ENCODE measurements at regions of chr4 and their contacts with region 1.

Region 1: GRCh38 chr4:100117750-100118149 is 72.5 kb downstream of the DDIT4L start:
- DNase-seq: no peak
- ATAC-seq: no peak
- H3K4me3 ChIP-seq: no peak overlapping the region
- H3K27ac ChIP-seq: no peak overlapping the region
- H3K4me1 ChIP-seq: peaks cover 0 to 7% (median 0%) of the 10 kb centered on the region in 9 donors
- H3K27me3 ChIP-seq: no peaks in the 10 kb centered on the region
- CTCF ChIP-seq: no peak

Region 2: DNA sequence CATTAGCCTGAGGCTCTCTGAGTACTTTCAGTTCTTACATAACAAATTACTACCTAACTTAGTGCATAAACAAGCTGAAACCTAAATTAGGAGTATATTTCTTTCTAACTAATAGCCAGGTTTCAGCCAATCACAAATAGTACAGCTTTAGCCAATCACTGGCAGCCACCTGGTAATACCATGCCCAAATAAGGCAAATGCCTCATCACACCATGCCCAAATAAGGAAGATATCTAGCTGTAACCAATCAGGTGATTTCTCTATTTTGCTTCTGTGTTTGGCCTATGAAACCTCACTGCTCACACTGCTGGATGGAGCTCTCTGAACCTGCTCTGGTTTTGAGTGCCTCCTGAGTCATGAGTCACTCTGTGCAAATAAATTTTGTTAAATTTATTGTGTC is 41.0 kb before region 1 on chr4:
- intact Hi-C with region 1: no loop called
- DNase-seq: no peak
- ATAC-seq: no peak
- H3K4me3 ChIP-seq: no peak overlapping the region
- H3K27ac ChIP-seq: no peak overlapping the region
- H3K4me1 ChIP-seq: no peaks in the 10 kb centered on the region
- H3K27me3 ChIP-seq: peaks cover 0 to 6% (median 0%) of the 10 kb centered on the region in 7 donors
- CTCF ChIP-seq: no peak

Region 3: GRCh38 chr4:100162027-100162685 is 44.4 kb after region 1 on chr4:
- intact Hi-C with region 1: loop called in 1 of 10 experiments (anchors 10 kb)
- DNase-seq: no peak
- ATAC-seq: no peak
- H3K4me3 ChIP-seq: no peak overlapping the region
- H3K27ac ChIP-seq: no peak overlapping the region
- H3K4me1 ChIP-seq: no peaks in the 10 kb centered on the region
- H3K27me3 ChIP-seq: no peaks in the 10 kb centered on the region
- CTCF ChIP-seq: no peak

Measured in heart right ventricle (tissue), 16 donors.